ENCODE measurements at regions of chr20 and their contacts with region 1.

Region 1: GRCh38 chr20:32400476-32400875 is 42.3 kb downstream of the ASXL1 start:
- DNase-seq: no peak
- ATAC-seq: no peak
- H3K4me3 ChIP-seq: no peak overlapping the region
- H3K27ac ChIP-seq: no peak overlapping the region
- H3K4me1 ChIP-seq: peaks cover 0 to 6% (median 0%) of the 10 kb centered on the region in 9 donors
- H3K27me3 ChIP-seq: no peaks in the 10 kb centered on the region
- CTCF ChIP-seq: no peak

Region 2: GRCh38 chr20:32437391-32438074 is 37.1 kb after region 1 on chr20:
- intact Hi-C with region 1: loop called in 1 of 10 experiments (anchors 5 kb)
- DNase-seq: no peak
- ATAC-seq: no peak
- H3K4me3 ChIP-seq: no peak overlapping the region
- H3K27ac ChIP-seq: no peak overlapping the region
- H3K4me1 ChIP-seq: peaks cover 0 to 21% (median 17%) of the 10 kb centered on the region in 9 donors
- H3K27me3 ChIP-seq: no peaks in the 10 kb centered on the region
- CTCF ChIP-seq: peak in 2 of 9 donors; percentile 8 to 17

Measured in heart right ventricle (tissue), 16 donors.